ENCODE measurements at regions of chr10 and their contacts with region 1.

Region 1: DNA sequence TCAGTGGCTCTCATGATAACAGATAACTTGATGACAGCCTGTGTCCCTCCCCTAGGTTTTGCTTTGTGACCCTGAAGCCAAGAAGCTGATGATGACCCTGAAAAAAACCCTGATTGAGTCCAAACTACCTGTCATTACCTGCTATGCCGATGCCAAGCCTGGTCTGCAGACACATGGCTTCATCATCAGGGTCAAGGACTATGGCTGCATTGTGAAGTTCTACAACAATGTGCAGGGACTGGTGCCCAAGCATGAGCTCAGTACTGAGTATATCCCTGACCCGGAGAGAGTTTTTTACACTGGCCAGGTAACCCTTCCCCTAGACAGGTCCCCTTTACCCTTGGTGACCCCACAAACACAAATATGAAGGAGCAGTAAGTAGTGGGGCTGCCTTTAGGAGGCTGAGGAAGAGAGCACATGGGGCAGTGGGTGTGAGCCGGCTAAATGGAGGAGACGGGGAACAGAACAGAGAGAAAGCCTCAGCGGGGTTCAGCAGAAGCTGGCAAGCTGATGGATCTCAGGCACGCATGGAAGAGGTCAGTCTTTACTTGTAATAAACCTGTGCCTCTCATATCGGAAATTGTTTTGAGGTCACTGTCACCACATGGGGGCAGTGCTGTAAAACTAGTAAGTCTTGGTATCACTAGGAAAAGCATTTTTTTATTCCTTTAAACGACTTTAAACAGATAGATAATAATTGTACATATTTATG is 20.2 kb downstream of the PDCD11 start:
- DNase-seq: peak; percentile 75
- H3K4me3 ChIP-seq: no peak overlapping the region
- H3K27ac ChIP-seq: no peak overlapping the region
- H3K4me1 ChIP-seq: no peaks in the 10 kb centered on the region
- H3K27me3 ChIP-seq: no peaks in the 10 kb centered on the region
- CTCF ChIP-seq: peak; percentile 66

Region 2: GRCh38 chr10:103278862-103279298 is 137.7 kb before region 1 on chr10:
- intact Hi-C with region 1: no loop called
- DNase-seq: peak; percentile 51
- H3K4me3 ChIP-seq: no peak overlapping the region
- H3K27ac ChIP-seq: no peak overlapping the region
- H3K4me1 ChIP-seq: no peaks in the 10 kb centered on the region
- H3K27me3 ChIP-seq: peaks cover 49% of the 10 kb centered on the region
- CTCF ChIP-seq: no peak

Region 3: GRCh38 chr10:103481974-103482531 is 65.5 kb after region 1 on chr10:
- intact Hi-C with region 1: loop called (anchors 2 kb)
- DNase-seq: peak; percentile 44
- H3K4me3 ChIP-seq: no peak overlapping the region
- H3K27ac ChIP-seq: no peak overlapping the region
- H3K4me1 ChIP-seq: no peaks in the 10 kb centered on the region
- H3K27me3 ChIP-seq: no peaks in the 10 kb centered on the region
- CTCF ChIP-seq: peak; percentile 44

Region 4: GRCh38 chr10:103592186-103593021 is 175.8 kb after region 1 on chr10:
- intact Hi-C with region 1: loop called (anchors 10 kb)
- DNase-seq: no peak
- H3K4me3 ChIP-seq: no peak overlapping the region
- H3K27ac ChIP-seq: no peak overlapping the region
- H3K4me1 ChIP-seq: peaks cover 3% of the 10 kb centered on the region
- H3K27me3 ChIP-seq: no peaks in the 10 kb centered on the region
- CTCF ChIP-seq: peak; percentile 37

Region 5: DNA sequence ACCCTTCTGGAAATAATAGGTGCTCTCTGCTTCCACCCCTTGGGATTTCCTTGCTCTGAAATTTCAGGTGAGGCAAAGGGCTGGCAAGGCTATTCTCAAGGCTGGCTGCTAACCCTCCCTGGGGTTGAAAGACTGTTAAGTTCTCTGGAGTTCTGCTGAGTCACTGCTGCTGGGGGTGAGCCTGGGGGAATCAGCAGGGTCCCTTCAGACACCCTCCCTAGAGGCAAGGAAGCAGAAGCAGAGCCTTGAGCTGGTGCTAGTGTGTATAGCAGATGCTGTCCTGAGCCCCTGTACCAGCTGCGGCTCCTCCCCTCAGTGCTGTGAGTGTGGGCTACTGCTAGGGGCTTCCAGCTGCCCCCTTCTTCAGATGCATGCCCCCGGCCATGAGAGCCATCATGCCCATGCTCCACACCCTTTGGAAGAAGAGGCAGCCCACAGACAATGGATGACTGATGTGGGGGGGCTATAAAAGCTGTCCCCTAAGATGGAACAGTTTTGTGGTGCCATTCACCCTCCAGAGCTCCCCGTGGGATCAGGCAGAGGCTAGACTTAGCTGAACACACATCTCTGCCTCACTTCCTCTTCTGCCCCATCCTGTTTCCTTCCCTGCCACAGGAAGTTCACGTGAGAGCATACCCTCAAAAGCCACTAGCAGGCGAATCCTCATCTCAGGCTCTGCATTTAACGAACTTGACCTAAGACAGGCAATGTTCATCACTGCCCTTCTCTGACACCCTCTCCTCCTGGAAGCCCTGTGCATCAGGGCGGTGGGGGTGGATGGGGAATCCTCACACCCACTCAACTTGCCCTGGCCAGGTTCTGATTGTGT is 347.0 kb after region 1 on chr10:
- intact Hi-C with region 1: no loop called
- DNase-seq: no peak
- H3K4me3 ChIP-seq: no peak overlapping the region
- H3K27ac ChIP-seq: no peak overlapping the region
- H3K4me1 ChIP-seq: peaks cover 13% of the 10 kb centered on the region
- H3K27me3 ChIP-seq: no peaks in the 10 kb centered on the region
- CTCF ChIP-seq: no peak

Measured in colonic mucosa (tissue), 4 donors.